ENCODE measurements at regions of chr11 and their contacts with region 1.

Region 1: GRCh38 chr11:107689317-107690202 is 22.3 kb downstream of the SLN start:
- DNase-seq: peak; percentile 72
- H3K4me3 ChIP-seq: no peak overlapping the region
- H3K27ac ChIP-seq: no peak overlapping the region
- H3K4me1 ChIP-seq: no peaks in the 10 kb centered on the region
- H3K27me3 ChIP-seq: no peaks in the 10 kb centered on the region
- CTCF ChIP-seq: peak; percentile 64

Region 2: GRCh38 chr11:107538821-107539220 is 150.7 kb before region 1 on chr11:
- intact Hi-C with region 1: no loop called
- DNase-seq: no peak
- H3K4me3 ChIP-seq: no peak overlapping the region
- H3K27ac ChIP-seq: no peak overlapping the region
- H3K4me1 ChIP-seq: no peaks in the 10 kb centered on the region
- H3K27me3 ChIP-seq: no peaks in the 10 kb centered on the region
- CTCF ChIP-seq: no peak

Region 3: GRCh38 chr11:107573438-107573837 is 116.1 kb before region 1 on chr11:
- intact Hi-C with region 1: loop called (anchors 5 kb)
- DNase-seq: no peak
- H3K4me3 ChIP-seq: no peak overlapping the region
- H3K27ac ChIP-seq: no peak overlapping the region
- H3K4me1 ChIP-seq: no peaks in the 10 kb centered on the region
- H3K27me3 ChIP-seq: no peaks in the 10 kb centered on the region
- CTCF ChIP-seq: no peak

Region 4: DNA sequence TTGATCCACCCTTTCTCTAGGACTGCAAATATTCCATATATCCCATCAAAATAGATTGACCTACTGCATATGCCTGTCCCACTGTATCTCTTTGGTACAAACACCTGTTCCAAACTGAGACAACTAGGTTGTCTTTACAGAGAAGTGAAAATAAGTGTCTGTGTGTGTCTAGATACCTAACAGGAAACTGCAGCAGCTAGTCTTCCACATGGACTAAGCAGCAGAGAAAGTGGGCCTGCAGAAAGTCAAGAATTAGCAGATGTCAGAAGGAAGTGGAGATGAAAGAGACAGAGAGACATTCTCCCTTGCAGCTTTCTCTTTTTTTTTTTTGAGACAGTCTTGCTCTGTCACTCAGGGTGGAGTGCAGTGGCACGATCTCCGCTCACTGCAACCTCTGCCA is 234.7 kb after region 1 on chr11:
- intact Hi-C with region 1: no loop called
- DNase-seq: no peak
- H3K4me3 ChIP-seq: no peak overlapping the region
- H3K27ac ChIP-seq: no peak overlapping the region
- H3K4me1 ChIP-seq: peaks cover 7% of the 10 kb centered on the region
- H3K27me3 ChIP-seq: peaks cover 5% of the 10 kb centered on the region
- CTCF ChIP-seq: no peak